Transverse colon (tissue), 4 donors: ENCODE measurements at regions of chr7 and their contacts with region 1.

Region 1: DNA sequence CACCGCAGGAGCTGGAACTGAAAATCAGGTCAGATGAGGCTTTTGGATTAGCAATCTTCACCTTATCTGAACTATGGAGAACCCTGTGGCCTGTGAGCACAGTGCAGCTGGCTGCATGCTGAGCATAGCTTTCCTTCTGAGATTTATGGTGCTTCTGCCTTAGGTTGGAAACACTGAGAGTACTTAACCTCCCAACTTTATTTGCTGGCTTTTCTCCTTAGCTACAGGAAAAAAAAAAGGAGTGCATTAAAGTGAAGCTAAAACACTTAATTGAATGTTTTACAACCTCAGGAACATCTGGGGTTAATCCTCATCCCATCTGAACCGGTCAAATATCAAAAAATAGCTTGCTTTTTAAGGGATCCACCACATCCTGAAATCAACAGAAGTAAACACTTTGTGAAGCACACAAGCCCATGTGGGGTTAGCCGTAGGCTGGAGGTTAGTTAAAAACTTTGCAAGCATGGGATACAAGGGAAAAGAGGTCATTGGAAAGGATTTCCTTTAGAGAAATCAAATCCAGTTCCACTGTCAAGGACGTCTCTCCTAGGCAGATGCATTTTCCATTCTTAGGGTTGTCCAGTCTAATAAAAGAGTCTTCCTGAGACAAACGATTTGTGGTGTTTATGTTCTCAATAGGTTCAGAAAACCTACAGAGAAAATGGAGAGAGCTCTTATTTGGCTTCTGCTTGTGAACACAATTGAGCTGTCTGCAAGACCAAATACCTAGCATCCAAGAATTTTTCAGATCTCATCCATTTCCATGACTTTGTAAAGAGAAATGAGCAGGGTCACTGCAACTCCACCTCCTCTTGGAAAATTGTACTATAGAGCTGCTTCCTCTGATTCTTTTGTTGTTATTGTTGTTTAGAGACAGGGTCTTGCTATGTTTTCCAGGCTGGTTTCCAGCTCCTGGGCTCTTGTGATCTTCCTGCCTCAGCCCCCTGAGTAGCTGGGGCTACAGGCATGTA is 470.4 kb upstream of the IGFBP3 start:
- DNase-seq: no peak
- H3K4me3 ChIP-seq: no peak overlapping the region
- H3K27ac ChIP-seq: peak overlapping the region; percentile 41 to 61 (median 44)
- H3K4me1 ChIP-seq: peaks cover 0 to 15% (median 2%) of the 10 kb centered on the region in 4 donors
- H3K27me3 ChIP-seq: no peaks in the 10 kb centered on the region
- CTCF ChIP-seq: peak in 1 of 5 experiments; percentile 25
- EP300 ChIP-seq: no peak
- POLR2A ChIP-seq: no peak

Region 2: GRCh38 chr7:46576950-46577349 is 185.4 kb after region 1 on chr7:
- in situ Hi-C with region 1: no loop called
- intact Hi-C with region 1: loop called (anchors 10 kb)
- DNase-seq: no peak
- H3K4me3 ChIP-seq: no peak overlapping the region
- H3K27ac ChIP-seq: no peak overlapping the region
- H3K4me1 ChIP-seq: no peaks in the 10 kb centered on the region
- H3K27me3 ChIP-seq: no peaks in the 10 kb centered on the region
- CTCF ChIP-seq: no peak
- EP300 ChIP-seq: no peak
- POLR2A ChIP-seq: no peak